Activated CD4-positive, alpha-beta T cell treated with anti-CD3 and anti-CD28 coated beads, Interleukin-2, amount 10 ng/mL, durations not matched to agents 24 days and 14 days (primary cell): ENCODE measurements at regions of chr11 and their contacts with region 1.

Region 1: DNA sequence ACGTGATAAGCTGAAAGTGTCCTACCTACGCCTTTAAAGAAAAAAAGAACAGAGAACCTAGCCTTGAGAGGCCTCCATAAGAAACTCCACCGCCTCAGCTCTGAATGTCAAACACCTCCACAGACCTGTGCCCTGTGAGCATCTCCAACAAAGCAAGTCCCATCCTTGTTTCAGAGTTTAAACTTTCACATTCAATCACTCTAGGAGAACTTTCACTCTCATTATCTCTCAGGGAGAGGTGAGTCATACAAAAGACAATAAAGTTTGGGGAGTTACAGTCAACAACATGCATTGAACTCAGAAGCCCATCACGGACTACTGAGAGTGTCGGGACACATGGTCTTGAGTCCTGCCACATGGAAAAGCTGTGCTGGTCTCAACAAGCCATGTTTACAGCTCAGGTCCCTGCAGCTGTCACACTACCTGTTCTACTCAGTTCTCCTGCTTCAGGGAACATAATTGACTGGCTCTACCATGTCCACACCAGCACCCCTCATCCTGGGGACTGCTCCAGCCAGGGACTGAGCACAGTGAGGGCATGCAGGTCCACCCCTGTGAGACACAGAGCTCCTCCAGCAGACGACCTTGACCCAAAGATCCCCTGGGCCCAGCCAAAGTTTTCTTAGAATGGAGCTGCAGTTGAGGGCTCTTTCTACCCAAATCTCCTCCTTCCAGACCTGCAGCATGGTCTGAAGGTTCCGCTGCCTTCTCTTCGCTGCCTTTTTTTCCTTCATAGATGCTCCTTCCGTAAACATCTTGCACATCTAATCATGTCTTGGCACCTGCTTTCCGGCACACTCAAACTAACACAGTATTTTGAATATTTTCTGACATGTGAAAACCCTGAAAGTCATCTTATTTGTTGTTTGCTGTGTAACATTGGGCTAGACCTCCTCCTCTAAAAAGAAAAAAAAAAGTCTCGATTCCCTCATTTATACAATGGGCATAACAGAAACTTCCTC is 114.9 kb downstream of the ETS1 start:
- DNase-seq: peak; percentile 91
- H3K4me3 Mint-ChIP-seq: peak overlapping the region; percentile 85
- H3K27ac Mint-ChIP-seq: peak overlapping the region; percentile 96
- H3K4me1 Mint-ChIP-seq: peaks cover 95% of the 10 kb centered on the region
- H3K27me3 Mint-ChIP-seq: no peaks in the 10 kb centered on the region

Region 2: GRCh38 chr11:128172046-128172878 is 300.1 kb before region 1 on chr11:
- intact Hi-C with region 1: loop called (anchors 5 kb)
- DNase-seq: peak; percentile 95
- H3K4me3 Mint-ChIP-seq: no peak overlapping the region
- H3K27ac Mint-ChIP-seq: peak overlapping the region; percentile 56
- H3K4me1 Mint-ChIP-seq: peaks cover 25% of the 10 kb centered on the region
- H3K27me3 Mint-ChIP-seq: peaks cover 13% of the 10 kb centered on the region

Region 3: DNA sequence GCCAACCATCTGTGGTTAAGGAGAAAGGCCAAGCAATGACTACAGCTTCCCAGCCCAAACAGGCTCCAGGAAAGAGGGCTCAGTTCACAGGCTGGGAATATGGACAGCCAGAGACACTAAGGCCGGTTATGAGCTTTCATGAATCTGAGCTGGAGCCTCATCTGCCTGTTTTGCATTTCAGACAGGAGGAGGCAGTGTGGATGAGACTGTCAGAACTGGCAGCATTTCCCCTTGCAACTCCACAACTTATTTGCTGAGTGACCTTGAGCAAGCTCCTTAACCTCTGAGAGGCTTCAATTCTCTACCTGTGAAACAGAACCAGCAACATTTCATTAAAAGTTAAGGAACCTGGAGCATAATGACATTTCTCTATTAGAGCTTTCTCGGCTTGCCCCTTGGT is 149.0 kb before region 1 on chr11:
- intact Hi-C with region 1: loop called (anchors 1 kb)
- DNase-seq: peak; percentile 87
- H3K4me3 Mint-ChIP-seq: peak overlapping the region; percentile 69
- H3K27ac Mint-ChIP-seq: peak overlapping the region; percentile 97
- H3K4me1 Mint-ChIP-seq: peaks cover 79% of the 10 kb centered on the region
- H3K27me3 Mint-ChIP-seq: no peaks in the 10 kb centered on the region

Region 4: DNA sequence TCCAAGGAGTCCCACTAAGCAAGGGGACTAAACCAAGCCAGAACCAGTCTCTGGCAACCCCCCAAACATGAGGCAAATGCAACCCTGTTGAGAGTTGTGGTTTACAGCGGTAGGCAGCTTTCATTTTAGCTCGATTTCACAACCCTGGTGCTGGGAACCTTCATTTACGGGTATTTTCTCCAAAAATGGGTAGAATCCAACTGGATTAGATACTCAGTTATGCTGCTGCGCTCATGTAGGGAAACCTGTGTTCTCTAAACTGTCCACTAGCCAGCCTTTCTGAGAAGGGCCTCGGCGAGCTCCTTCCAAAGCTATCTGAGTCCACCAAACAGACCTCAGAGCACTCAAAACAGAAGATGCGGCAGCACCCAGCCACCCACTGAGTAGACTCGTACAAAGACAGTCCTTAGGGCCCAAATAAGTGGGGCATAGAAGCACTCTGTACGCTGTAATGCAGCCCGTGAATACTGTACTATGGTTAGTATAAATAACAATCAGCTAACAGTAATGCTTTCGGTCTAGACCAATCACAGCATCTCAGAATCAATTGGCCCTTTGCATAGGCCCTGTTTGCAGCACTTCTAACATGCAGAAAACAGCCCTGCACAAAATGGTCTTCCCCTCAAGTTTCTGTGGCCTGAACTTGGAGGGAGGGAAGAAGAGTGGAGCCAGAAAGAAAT is 10.2 kb after region 1 on chr11:
- intact Hi-C with region 1: loop called (anchors 1 kb)
- DNase-seq: peak; percentile 86
- H3K4me3 Mint-ChIP-seq: peak overlapping the region; percentile 85
- H3K27ac Mint-ChIP-seq: peak overlapping the region; percentile 96
- H3K4me1 Mint-ChIP-seq: peaks cover 91% of the 10 kb centered on the region
- H3K27me3 Mint-ChIP-seq: no peaks in the 10 kb centered on the region

Region 5: GRCh38 chr11:128515826-128516778 is 43.7 kb after region 1 on chr11:
- intact Hi-C with region 1: loop called (anchors 2 kb)
- DNase-seq: peak; percentile 68
- H3K4me3 Mint-ChIP-seq: peak overlapping the region; percentile 93
- H3K27ac Mint-ChIP-seq: peak overlapping the region; percentile 99
- H3K4me1 Mint-ChIP-seq: peaks cover 70% of the 10 kb centered on the region
- H3K27me3 Mint-ChIP-seq: no peaks in the 10 kb centered on the region

Region 6: DNA sequence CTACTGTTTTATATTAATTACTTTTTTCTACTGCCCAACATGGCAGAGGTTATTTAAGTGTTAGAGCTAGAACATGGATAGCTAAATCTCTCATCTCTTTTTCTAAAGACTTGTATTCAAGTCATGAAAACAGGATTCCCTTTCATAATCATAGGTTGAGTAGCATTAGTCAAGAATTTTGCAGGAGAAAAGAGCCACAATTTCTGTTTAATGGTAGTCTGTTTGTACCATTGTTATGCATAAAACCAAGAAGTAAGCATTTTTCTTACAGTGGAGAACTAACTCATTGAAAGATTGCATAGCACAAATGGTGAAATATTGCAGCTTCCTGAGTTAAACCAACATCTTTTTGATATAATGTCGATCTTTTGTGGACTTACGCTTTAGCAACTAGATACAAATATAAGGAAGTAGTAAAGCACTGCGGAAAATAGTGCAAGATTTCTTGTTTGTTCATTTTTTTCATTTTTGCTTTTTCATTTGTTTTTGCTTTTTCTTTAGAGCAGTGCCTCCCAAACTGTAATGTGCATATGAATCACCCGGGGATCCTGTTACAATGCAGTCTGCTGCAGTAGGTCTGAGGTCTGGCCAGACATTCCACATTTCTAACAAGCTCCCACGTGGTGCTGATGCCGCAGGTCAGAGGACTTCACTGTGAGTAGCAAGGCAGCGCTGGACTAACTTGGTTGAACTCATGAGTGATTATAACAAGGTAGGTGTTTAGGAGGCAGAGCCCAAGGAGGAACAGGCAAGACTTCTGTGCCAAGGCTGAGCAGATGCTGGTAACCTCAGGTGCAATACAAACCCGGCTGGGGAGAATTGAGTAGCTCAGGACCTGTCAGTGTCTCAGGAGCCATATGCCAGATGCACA is 110.3 kb after region 1 on chr11:
- intact Hi-C with region 1: loop called (anchors 1 kb)
- DNase-seq: no peak
- H3K4me3 Mint-ChIP-seq: peak overlapping the region; percentile 59
- H3K27ac Mint-ChIP-seq: peak overlapping the region; percentile 81
- H3K4me1 Mint-ChIP-seq: peaks cover 35% of the 10 kb centered on the region
- H3K27me3 Mint-ChIP-seq: peaks cover 7% of the 10 kb centered on the region

Region 7: DNA sequence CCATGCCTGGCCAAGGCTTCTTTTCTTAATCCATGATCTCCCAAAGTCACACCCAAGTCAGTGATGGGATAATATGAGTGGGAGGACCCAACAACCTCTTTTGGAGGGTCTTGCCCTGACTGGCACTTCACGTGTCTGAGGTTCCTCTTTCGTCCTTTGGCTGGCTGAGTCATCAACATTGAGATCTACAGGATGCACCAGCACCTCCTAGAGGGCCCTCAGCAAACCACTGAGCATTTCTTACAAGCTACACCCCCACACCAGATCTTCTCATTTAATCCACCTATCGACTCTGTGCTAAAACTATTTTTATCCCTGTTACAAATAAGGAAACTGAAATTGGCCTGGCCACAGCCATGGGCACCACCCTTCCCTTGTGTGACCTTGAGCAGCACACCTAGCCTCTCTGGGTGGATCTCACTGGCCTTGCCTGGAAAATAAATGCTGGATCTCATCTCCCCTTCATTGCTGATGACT is 284.9 kb after region 1 on chr11:
- intact Hi-C with region 1: loop called (anchors 5 kb)
- DNase-seq: peak; percentile 89
- H3K4me3 Mint-ChIP-seq: peak overlapping the region; percentile 37
- H3K27ac Mint-ChIP-seq: peak overlapping the region; percentile 90
- H3K4me1 Mint-ChIP-seq: peaks cover 59% of the 10 kb centered on the region
- H3K27me3 Mint-ChIP-seq: no peaks in the 10 kb centered on the region